ENCODE measurements at regions of chr2 and their contacts with region 1.

Region 1: DNA sequence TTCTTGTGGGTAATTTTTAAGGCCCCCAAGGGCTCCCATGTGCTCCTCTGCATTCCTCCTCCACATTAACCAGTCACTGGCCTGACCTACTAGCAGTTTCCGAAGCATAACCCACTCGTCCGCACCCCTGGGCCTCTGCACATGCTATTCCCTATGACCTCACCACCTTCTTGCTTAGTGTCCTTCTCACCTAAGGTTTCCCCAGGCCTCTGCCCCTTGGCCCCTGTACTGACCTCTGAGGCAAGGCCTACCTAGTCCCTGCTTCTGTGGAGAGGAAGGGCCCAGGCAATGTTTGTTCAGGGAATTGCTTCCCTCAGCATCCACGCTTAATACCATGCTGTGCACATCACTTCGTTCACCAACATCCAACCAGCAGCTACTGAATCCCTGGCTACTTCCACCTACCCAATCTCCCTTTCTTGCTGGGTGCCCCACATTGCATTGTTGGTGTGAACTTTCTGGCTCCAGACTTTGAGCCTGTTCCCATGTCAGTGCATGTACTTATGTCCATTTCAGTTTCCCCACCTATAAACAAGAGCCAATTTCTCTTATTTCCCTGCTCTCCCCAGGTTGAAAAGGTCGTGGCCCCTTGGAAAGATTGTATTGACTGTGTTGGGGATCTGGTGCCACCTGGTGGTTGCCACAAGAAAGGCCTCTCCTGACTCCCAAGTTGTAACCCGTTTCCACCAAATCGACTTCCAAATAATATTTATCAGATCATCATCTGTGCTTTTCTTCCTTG is 19.2 kb upstream of the TMEM177 start:
- DNase-seq: peak; percentile 22
- ATAC-seq: peak; percentile 78
- H3K4me3 ChIP-seq: no peak overlapping the region
- H3K27ac ChIP-seq: no peak overlapping the region
- H3K4me1 ChIP-seq: no peaks in the 10 kb centered on the region
- H3K27me3 ChIP-seq: no peaks in the 10 kb centered on the region
- CTCF ChIP-seq: peak; percentile 75 to 92 (median 92)
- POLR2A ChIP-seq: no peak
- RAD21 ChIP-seq: peak; percentile 78

Region 2: DNA sequence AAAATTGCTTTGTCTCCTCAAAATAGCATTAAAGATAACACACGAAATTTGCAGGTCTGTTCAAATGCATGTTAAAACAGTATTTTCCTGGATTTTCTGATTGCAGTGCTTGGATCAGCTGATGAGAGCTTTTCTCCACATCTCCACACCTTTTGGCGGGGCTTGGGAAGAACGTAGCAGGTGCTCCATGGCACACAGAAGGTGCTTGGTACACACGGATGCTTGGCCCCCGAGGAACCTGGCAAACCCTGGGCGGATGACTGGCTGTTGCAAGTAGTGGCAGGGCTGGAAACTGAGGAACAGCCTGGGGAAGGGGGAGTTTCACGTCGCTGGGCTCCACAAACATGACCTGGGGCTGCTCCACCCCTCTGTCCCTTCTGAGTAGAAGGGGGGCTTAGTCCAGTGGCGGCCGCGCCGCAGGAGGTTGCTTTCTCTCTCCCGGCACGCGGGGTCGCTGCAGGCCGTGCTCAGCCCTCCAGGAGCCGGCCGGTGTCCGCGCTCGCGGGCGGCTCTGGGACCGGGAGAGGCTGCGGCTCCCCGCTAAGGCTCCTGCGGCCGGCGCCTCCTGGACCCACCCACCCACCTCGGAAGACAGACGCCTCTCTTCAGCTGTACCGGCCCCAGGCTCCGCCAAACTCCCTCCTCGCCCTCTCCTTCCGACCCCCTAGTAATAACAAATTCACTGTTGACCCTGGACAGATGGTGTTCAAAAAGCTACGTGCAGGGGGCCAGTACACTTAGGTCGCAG is 648.4 kb before region 1 on chr2:
- CTCF ChIA-PET with region 1: no interaction called
- POLR2A ChIA-PET with region 1: no interaction called
- RAD21 ChIA-PET with region 1: no interaction called
- intact Hi-C with region 1: loop called (anchors 2 kb)
- DNase-seq: peak; percentile 16
- ATAC-seq: peak; percentile 95
- H3K4me3 ChIP-seq: peak overlapping the region in 1 of 2 experiments; percentile 10; a peak in 1 of 4 replicates
- H3K27ac ChIP-seq: no peak overlapping the region
- H3K4me1 ChIP-seq: no peaks in the 10 kb centered on the region; a peak in 1 of 4 replicates
- H3K27me3 ChIP-seq: peaks cover 18% of the 10 kb centered on the region; the same call in 1 of the 2 replicates
- CTCF ChIP-seq: peak; percentile 59 to 74 (median 64)
- POLR2A ChIP-seq: no peak
- RAD21 ChIP-seq: peak; percentile 83

Region 3: GRCh38 chr2:119059287-119059686 is 600.5 kb before region 1 on chr2:
- CTCF ChIA-PET with region 1: no interaction called
- POLR2A ChIA-PET with region 1: no interaction called
- RAD21 ChIA-PET with region 1: no interaction called
- intact Hi-C with region 1: no loop called
- DNase-seq: no peak
- ATAC-seq: no peak
- H3K4me3 ChIP-seq: no peak overlapping the region
- H3K27ac ChIP-seq: no peak overlapping the region
- H3K4me1 ChIP-seq: no peaks in the 10 kb centered on the region
- H3K27me3 ChIP-seq: 0 out of 2 replicates have a peak, but pooled peaks cover 5% of the 10 kb centered on the region
- CTCF ChIP-seq: no peak
- POLR2A ChIP-seq: no peak
- RAD21 ChIP-seq: no peak

Region 4: GRCh38 chr2:119407430-119408220 is 252.1 kb before region 1 on chr2:
- CTCF ChIA-PET with region 1: no interaction called
- POLR2A ChIA-PET with region 1: no interaction called
- RAD21 ChIA-PET with region 1: no interaction called
- intact Hi-C with region 1: loop called (anchors 1 kb)
- DNase-seq: peak; percentile 52
- ATAC-seq: peak; percentile 90
- H3K4me3 ChIP-seq: no peak overlapping the region
- H3K27ac ChIP-seq: no peak overlapping the region
- H3K4me1 ChIP-seq: no peaks in the 10 kb centered on the region
- H3K27me3 ChIP-seq: no peaks in the 10 kb centered on the region
- CTCF ChIP-seq: peak; percentile 62 to 95 (median 82)
- POLR2A ChIP-seq: no peak
- RAD21 ChIP-seq: peak; percentile 96

Region 5: GRCh38 chr2:119517433-119517832 is 142.3 kb before region 1 on chr2:
- CTCF ChIA-PET with region 1: no interaction called
- POLR2A ChIA-PET with region 1: no interaction called
- RAD21 ChIA-PET with region 1: no interaction called
- intact Hi-C with region 1: loop called (anchors 1 kb)
- DNase-seq: peak; percentile 29
- ATAC-seq: peak; percentile 98
- H3K4me3 ChIP-seq: no peak overlapping the region
- H3K27ac ChIP-seq: no peak overlapping the region
- H3K4me1 ChIP-seq: no peaks in the 10 kb centered on the region
- H3K27me3 ChIP-seq: no peaks in the 10 kb centered on the region
- CTCF ChIP-seq: peak; percentile 40 to 81 (median 76); a peak in 5 of 6 replicates
- POLR2A ChIP-seq: no peak
- RAD21 ChIP-seq: peak; percentile 52; the same call in 1 of the 2 replicates

Region 6: DNA sequence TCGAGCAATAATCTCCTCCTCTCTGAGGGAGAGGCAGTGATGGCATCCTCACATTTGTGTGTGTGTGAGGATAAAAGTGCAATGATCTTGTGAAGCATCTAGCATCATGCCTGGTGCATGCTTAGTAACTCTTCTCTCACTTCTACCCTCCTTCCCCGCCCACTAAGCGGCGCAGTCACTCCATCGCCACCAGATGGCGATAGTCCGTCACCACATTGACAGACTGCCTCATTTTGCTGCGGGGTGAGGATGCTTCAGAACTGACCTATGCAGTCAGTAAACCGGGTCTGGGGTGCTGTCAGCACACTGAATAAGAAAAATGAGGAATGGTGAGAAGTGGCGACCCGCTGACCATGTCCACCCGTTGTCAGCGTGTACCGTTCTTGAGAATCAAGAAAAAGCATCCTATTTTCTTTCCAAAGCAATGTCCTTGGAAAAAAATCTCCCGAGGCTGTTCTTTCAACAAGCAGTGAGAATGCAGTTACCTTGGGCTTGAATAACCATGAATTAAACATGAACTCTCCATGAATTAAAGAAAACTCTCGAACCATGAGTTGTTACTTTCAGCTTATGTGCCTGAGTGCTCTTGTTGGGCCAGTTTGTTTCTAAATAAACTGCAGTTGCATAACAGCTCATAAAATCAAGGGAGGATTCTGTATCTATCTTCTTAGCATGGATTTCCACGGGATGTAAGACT is 18.1 kb before region 1 on chr2:
- CTCF ChIA-PET with region 1: interaction called, 3 read pairs
- POLR2A ChIA-PET with region 1: no interaction called
- RAD21 ChIA-PET with region 1: no interaction called
- intact Hi-C with region 1: loop called (anchors 2 kb)
- DNase-seq: peak; percentile 63
- ATAC-seq: peak; percentile 99
- H3K4me3 ChIP-seq: no peak overlapping the region
- H3K27ac ChIP-seq: no peak overlapping the region
- H3K4me1 ChIP-seq: no peaks in the 10 kb centered on the region
- H3K27me3 ChIP-seq: no peaks in the 10 kb centered on the region
- CTCF ChIP-seq: peak; percentile 91 to 99 (median 97)
- POLR2A ChIP-seq: no peak
- RAD21 ChIP-seq: peak; percentile 84

Region 7: DNA sequence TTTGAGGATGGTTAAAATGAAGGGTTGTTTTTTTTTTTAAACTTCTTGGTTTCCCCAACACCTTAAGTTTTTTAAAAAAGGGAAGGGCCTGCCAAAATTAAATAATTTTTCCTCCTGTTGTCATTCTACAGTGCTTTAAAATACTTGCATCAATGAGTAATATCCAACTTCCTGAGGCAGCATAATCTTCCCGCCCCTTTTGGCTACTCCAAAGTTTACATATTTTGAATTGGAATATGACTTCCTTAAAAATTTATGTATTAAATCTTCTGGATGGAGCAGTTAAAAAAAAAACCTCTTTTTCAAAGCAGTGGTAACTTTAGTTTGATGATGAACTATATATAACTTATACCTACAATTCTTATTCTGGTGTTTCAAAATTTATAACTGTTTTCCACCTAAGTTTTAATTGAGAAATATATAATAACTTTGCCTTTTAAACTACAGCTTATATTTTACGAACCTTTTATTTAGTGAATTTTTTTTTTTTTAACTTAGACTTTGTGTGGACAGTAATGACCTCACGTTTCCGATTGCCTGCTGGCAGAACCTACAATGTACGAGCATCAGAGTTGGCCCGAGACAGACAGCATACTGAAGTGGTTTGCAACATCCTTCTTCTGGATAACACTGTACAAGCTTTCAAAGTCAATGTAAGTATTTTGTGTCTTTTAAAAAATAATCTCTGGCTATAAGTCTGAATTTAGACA is 149.7 kb after region 1 on chr2:
- CTCF ChIA-PET with region 1: no interaction called
- POLR2A ChIA-PET with region 1: no interaction called
- RAD21 ChIA-PET with region 1: no interaction called
- intact Hi-C with region 1: no loop called
- DNase-seq: no peak
- ATAC-seq: no peak
- H3K4me3 ChIP-seq: no peak overlapping the region
- H3K27ac ChIP-seq: no peak overlapping the region
- H3K4me1 ChIP-seq: peaks cover 2 to 10% of the 10 kb centered on the region in 2 experiments; a peak in 2 of 4 replicates
- H3K27me3 ChIP-seq: no peaks in the 10 kb centered on the region
- CTCF ChIP-seq: no peak
- POLR2A ChIP-seq: no peak
- RAD21 ChIP-seq: no peak